ENCODE measurements at regions of chr2 and their contacts with region 1.

Region 1: GRCh38 chr2:100610381-100610831 is 47.6 kb downstream of the PDCL3 start:
- DNase-seq: peak; percentile 61
- H3K4me3 Mint-ChIP-seq: no peak overlapping the region
- H3K27ac Mint-ChIP-seq: no peak overlapping the region
- H3K4me1 Mint-ChIP-seq: peaks cover 5% of the 10 kb centered on the region
- H3K27me3 Mint-ChIP-seq: peaks cover 13% of the 10 kb centered on the region
- CTCF ChIP-seq: peak; percentile 67

Region 2: GRCh38 chr2:100529900-100530299 is 80.5 kb before region 1 on chr2:
- CTCF ChIA-PET with region 1: no interaction called
- POLR2A ChIA-PET with region 1: no interaction called
- intact Hi-C with region 1: no loop called
- DNase-seq: no peak
- H3K4me3 Mint-ChIP-seq: no peak overlapping the region
- H3K27ac Mint-ChIP-seq: no peak overlapping the region
- H3K4me1 Mint-ChIP-seq: no peaks in the 10 kb centered on the region
- H3K27me3 Mint-ChIP-seq: peaks cover 11% of the 10 kb centered on the region
- CTCF ChIP-seq: no peak

Region 3: DNA sequence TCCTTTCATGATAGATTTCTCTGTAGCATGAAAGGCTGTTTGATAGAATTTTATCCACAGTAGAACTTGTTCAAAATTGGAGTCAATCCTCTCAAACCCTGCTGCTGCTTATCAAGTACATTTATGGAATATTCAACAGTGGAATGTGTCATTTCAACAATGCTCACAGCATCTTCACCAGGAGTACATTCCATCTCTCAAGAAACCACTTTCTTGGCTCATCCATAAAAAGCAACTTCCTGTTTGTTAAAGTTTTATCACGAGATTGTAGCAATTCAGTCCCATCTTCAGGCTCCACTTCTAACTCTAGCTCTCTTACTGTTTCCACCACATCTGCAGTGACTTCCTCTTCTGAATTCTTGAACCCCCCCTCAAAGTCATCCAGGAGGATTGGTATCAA is 18.2 kb before region 1 on chr2:
- CTCF ChIA-PET with region 1: interaction called, 17 read pairs
- POLR2A ChIA-PET with region 1: no interaction called
- intact Hi-C with region 1: no loop called
- DNase-seq: no peak
- H3K4me3 Mint-ChIP-seq: no peak overlapping the region
- H3K27ac Mint-ChIP-seq: no peak overlapping the region
- H3K4me1 Mint-ChIP-seq: peaks cover 6% of the 10 kb centered on the region
- H3K27me3 Mint-ChIP-seq: no peaks in the 10 kb centered on the region
- CTCF ChIP-seq: no peak

Region 4: DNA sequence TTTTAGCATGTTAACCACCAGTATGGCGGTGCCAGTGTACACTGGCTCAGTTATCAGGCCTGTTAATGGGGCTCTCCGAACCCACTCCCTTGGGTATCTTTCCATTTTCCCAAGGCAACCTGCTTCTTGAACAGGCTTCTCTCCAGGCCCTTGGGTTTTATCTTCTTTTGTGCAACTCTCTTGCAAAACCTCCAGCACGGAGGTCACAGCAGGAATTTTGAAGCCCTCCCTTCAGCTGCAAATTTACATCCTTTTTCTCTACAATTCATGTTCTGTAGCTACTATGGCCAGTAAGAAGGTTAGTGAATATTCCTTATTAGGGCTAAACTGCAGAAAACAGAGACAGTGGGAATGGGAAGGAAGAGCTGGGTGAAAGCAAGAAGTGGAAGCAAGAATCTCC is 199.1 kb after region 1 on chr2:
- CTCF ChIA-PET with region 1: interaction called, 10 read pairs
- POLR2A ChIA-PET with region 1: no interaction called
- intact Hi-C with region 1: no loop called
- DNase-seq: no peak
- H3K4me3 Mint-ChIP-seq: no peak overlapping the region
- H3K27ac Mint-ChIP-seq: peak overlapping the region; percentile 0
- H3K4me1 Mint-ChIP-seq: peaks cover 5% of the 10 kb centered on the region
- H3K27me3 Mint-ChIP-seq: no peaks in the 10 kb centered on the region
- CTCF ChIP-seq: no peak

Region 5: DNA sequence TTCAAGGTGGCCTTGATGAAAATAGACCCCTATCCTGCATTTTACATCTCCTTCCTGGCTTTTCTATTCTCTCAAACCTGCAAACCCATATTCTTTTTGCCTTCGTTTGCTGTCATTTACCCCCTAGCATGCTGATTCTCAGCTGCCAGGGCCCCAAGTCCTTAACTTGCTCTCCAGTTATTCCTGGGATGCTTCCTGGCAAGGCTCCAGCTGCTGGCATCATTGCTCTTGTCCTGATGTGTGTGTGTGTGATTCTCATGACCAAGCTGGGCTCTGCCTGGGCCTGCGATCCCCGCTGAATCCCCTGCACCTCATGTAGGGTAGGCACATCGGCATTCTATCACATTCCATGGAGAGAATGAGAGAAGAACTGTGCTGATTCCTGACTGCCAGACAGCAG is 221.4 kb after region 1 on chr2:
- CTCF ChIA-PET with region 1: no interaction called
- POLR2A ChIA-PET with region 1: no interaction called
- intact Hi-C with region 1: no loop called
- DNase-seq: peak; percentile 12
- H3K4me3 Mint-ChIP-seq: no peak overlapping the region
- H3K27ac Mint-ChIP-seq: no peak overlapping the region
- H3K4me1 Mint-ChIP-seq: peaks cover 17% of the 10 kb centered on the region
- H3K27me3 Mint-ChIP-seq: no peaks in the 10 kb centered on the region
- CTCF ChIP-seq: no peak

Region 6: DNA sequence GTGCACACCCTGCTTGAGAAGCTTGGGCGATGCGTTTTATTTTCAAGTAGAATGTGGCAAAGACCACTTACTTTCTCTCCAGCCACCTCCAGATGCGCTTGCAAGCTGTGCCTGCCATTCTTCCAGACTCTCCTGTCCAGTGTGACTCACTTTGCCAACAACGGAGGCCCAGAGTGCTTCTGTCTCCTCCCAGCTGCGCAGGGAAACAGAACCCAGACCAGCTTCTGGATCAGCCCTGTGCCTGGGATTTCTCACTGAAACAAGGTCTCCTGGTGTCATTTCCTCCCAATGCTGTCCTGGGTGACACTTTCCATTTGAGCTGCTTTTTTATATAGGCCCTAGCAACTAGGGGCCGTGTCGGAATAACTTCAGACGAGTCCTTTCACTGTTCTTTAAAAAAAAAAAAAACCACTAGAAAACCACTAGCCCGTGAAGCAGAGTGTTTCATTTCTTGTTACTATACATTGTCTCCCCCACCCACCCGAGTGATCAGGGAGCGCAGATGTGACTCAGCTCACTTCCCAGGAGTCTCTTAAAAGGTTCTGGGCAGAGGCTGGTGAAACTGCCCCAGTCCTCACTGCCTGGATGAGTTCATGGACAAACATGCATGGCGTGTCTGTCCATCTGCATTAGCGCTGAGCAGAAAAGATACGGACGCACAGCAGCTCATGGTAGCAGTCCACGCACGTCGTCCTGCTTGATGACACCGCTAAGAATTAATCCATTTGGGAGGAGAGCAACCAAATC is 366.4 kb after region 1 on chr2:
- CTCF ChIA-PET with region 1: interaction called, 17 read pairs
- POLR2A ChIA-PET with region 1: no interaction called
- intact Hi-C with region 1: no loop called
- DNase-seq: no peak
- H3K4me3 Mint-ChIP-seq: no peak overlapping the region
- H3K27ac Mint-ChIP-seq: no peak overlapping the region
- H3K4me1 Mint-ChIP-seq: peaks cover 5% of the 10 kb centered on the region
- H3K27me3 Mint-ChIP-seq: no peaks in the 10 kb centered on the region
- CTCF ChIP-seq: no peak

Region 7: DNA sequence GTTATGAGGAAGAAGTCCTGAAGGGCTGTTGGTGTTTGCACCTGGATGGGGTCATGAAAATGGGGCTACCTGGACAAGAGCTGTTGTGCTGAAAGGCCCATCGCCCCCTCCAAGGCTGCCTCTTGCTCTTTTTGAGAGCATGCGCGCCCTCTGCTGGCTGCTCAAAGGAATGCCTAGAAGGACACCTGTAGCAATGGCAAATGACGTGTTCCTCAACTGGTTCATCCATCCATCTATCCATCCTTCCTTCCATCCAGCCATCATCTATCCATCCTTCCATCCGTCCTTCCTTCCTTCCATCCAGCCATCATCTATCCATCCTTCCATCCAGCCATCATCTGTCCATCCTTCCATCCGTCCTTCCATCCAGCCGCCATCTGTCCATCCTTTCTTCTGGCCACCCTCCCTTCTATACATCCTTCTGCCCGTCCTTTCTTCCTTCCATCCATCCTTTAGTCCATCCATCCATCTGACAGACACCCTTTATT is 374.5 kb after region 1 on chr2:
- CTCF ChIA-PET with region 1: interaction called, 109 read pairs
- POLR2A ChIA-PET with region 1: interaction called, 3 read pairs
- intact Hi-C with region 1: loop called (anchors 1 kb)
- DNase-seq: peak; percentile 75
- H3K4me3 Mint-ChIP-seq: no peak overlapping the region
- H3K27ac Mint-ChIP-seq: no peak overlapping the region
- H3K4me1 Mint-ChIP-seq: peaks cover 5% of the 10 kb centered on the region
- H3K27me3 Mint-ChIP-seq: no peaks in the 10 kb centered on the region
- CTCF ChIP-seq: peak; percentile 91

Region 8: GRCh38 chr2:101001691-101002561 is 391.5 kb after region 1 on chr2 and contains the start of gene RPL31:
- CTCF ChIA-PET with region 1: interaction called, 6 read pairs
- POLR2A ChIA-PET with region 1: interaction called, 9 read pairs
- intact Hi-C with region 1: loop called (anchors 5 kb)
- DNase-seq: peak; percentile 98
- H3K4me3 Mint-ChIP-seq: peak within 1 kb of the TSS; percentile 92
- H3K27ac Mint-ChIP-seq: peak within 1 kb of the TSS; percentile 99
- H3K4me1 Mint-ChIP-seq: peaks cover 19% of the 10 kb centered on the region
- H3K27me3 Mint-ChIP-seq: no peaks in the 10 kb centered on the region
- CTCF ChIP-seq: no peak
- total RNA-seq, gene RPL31: 1,648 and 1,732 TPM in 2 replicates

Region 9: DNA sequence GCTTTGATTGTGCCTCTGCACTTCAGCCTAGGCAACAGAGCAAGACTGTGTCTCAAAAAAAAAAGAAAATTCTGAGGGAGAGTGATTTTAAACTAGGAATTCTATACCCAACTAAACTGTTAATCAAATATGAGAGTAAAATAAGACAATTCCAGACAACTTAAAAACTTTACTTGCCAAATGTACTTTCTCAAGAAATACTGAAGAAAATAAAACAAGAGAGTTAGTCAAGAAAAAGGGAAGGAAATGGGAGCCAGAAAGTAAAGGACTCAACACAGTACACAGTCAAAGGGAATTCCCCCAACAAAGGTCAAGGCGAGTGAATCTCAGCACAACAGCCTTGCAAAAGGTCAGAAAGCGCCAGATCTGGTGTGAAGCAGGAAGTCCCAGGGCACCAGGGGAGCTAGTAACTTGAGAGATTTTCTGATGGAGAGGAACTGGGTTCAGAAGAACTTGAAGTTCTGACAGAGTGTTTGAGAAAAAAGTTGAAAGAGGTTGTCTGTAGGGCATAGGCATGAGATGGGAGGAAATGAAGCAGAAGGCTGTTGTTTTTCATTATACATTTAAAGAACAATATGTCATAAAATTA is 563.4 kb after region 1 on chr2:
- CTCF ChIA-PET with region 1: no interaction called
- POLR2A ChIA-PET with region 1: no interaction called
- intact Hi-C with region 1: no loop called
- DNase-seq: no peak
- H3K4me3 Mint-ChIP-seq: no peak overlapping the region
- H3K27ac Mint-ChIP-seq: peak overlapping the region; percentile 55
- H3K4me1 Mint-ChIP-seq: peaks cover 10% of the 10 kb centered on the region
- H3K27me3 Mint-ChIP-seq: no peaks in the 10 kb centered on the region
- CTCF ChIP-seq: no peak